ENCODE measurements at regions of chr7 and their contacts with region 1.

Region 1: DNA sequence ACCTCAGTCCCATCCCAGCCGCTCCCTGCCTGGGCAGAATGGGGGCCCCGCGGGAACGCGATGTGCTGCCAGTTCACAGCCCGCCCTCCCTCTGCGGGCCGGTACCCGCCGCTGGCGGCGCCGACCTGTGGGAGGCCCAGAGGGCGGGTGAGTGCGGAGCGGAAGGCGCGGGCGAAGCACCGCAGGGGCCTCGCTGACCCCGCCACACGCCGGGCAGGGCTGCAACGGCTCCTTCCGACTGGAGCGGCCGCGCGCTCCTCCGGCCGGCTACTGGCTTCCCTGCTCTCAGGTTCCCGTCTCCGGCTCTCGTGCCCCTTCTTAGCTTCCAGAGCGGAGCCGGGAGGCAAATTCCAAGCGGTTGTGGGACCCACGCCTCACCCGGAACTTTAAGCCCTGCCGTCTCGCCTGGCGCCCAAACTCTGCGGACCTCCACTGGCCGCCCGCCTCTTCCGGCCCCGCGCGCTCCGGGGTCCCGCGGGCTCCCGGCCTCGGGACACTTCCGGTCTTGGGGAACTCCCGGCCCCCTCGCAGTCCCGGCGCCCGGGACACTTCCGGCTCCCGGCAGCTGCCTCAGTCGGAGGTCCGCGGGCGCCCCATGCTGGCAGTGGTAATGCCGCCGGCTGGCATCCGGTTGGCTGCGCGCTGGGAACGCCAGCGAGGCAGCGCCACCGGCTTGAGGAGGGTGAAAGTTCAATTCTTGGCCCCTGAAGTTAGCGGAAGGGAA is at the start of gene CYREN:
- DNase-seq: peak; percentile 96 to 98 (median 97)
- ATAC-seq: peak; percentile 89 to 97 (median 95)
- H3K4me3 ChIP-seq: peak within 1 kb of the TSS; percentile 68 to 99 (median 87)
- H3K27ac ChIP-seq: peak within 1 kb of the TSS; percentile 83 to 100 (median 97)
- H3K4me1 ChIP-seq: peaks cover 9 to 63% (median 49%) of the 10 kb centered on the region in 12 donors
- H3K27me3 ChIP-seq: no peaks in the 10 kb centered on the region
- CTCF ChIP-seq: peak; percentile 42 to 93 (median 75)
- POLR2A ChIP-seq: peak in 1 of 2 donors; percentile 67
- total RNA-seq, gene CYREN: 18.4 to 35.8 (median 24.9) TPM

Region 2: GRCh38 chr7:134962270-134962780 is 208.1 kb before region 1 on chr7:
- intact Hi-C with region 1: loop called in 1 of 10 experiments (anchors 5 kb)
- DNase-seq: no peak
- ATAC-seq: no peak
- H3K4me3 ChIP-seq: no peak overlapping the region
- H3K27ac ChIP-seq: peak overlapping the region in 2 of 12 donors; percentile 11 to 28
- H3K4me1 ChIP-seq: peaks cover 0 to 19% (median 0%) of the 10 kb centered on the region in 12 donors
- H3K27me3 ChIP-seq: no peaks in the 10 kb centered on the region
- CTCF ChIP-seq: no peak
- POLR2A ChIP-seq: no peak

Region 3: GRCh38 chr7:134986363-134987251 is 183.8 kb before region 1 on chr7 and contains the start of gene AGBL3:
- intact Hi-C with region 1: loop called (anchors 1 to 10 kb)
- DNase-seq: peak; percentile 97 to 99 (median 98)
- ATAC-seq: peak; percentile 98 to 99 (median 99)
- H3K4me3 ChIP-seq: peak within 1 kb of the TSS; percentile 59 to 90 (median 77)
- H3K27ac ChIP-seq: peak within 1 kb of the TSS; percentile 65 to 93 (median 88)
- H3K4me1 ChIP-seq: peaks cover 0 to 32% (median 13%) of the 10 kb centered on the region in 12 donors
- H3K27me3 ChIP-seq: no peaks in the 10 kb centered on the region
- CTCF ChIP-seq: peak; percentile 41 to 90 (median 69)
- POLR2A ChIP-seq: peak in 1 of 2 donors; percentile 62
- total RNA-seq, gene AGBL3: 0.40 to 1.5 (median 0.93) TPM

Region 4: GRCh38 chr7:135147899-135148721 is 22.3 kb before region 1 on chr7 and contains the start of gene TMEM140:
- intact Hi-C with region 1: loop called in 3 of 10 experiments (anchors 1 to 2 kb)
- DNase-seq: peak in 2 of 5 donors; percentile 54 to 62
- ATAC-seq: peak; percentile 67 to 89 (median 82)
- H3K4me3 ChIP-seq: peak within 1 kb of the TSS; percentile 24 to 74 (median 60)
- H3K27ac ChIP-seq: peak within 1 kb of the TSS; percentile 88 to 99 (median 93)
- H3K4me1 ChIP-seq: peaks cover 0 to 70% (median 47%) of the 10 kb centered on the region in 12 donors
- H3K27me3 ChIP-seq: no peaks in the 10 kb centered on the region
- CTCF ChIP-seq: peak in 3 of 12 donors; percentile 13 to 27 (median 23)
- POLR2A ChIP-seq: peak in 1 of 2 donors; percentile 71
- total RNA-seq, gene TMEM140: 11.9 to 131 (median 29.5) TPM

Region 5: GRCh38 chr7:135211179-135211945 is 40.9 kb after region 1 on chr7 and contains the start of gene WDR91:
- intact Hi-C with region 1: loop called in 2 of 10 experiments (anchors 1 kb)
- DNase-seq: peak; percentile 95 to 98 (median 96)
- ATAC-seq: peak; percentile 95 to 99 (median 98)
- H3K4me3 ChIP-seq: peak within 1 kb of the TSS; percentile 49 to 99 (median 84)
- H3K27ac ChIP-seq: peak within 1 kb of the TSS; percentile 70 to 93 (median 84)
- H3K4me1 ChIP-seq: peaks cover 0 to 38% (median 8%) of the 10 kb centered on the region in 12 donors
- H3K27me3 ChIP-seq: no peaks in the 10 kb centered on the region
- CTCF ChIP-seq: peak in 2 of 12 donors; percentile 13 to 21
- POLR2A ChIP-seq: peak; percentile 39 to 82
- total RNA-seq, gene WDR91: 3.4 to 11.4 (median 5.8) TPM

Measured in heart left ventricle (tissue), 16 donors.